ENCODE measurements at regions of chr5 and their contacts with region 1.

Region 1: DNA sequence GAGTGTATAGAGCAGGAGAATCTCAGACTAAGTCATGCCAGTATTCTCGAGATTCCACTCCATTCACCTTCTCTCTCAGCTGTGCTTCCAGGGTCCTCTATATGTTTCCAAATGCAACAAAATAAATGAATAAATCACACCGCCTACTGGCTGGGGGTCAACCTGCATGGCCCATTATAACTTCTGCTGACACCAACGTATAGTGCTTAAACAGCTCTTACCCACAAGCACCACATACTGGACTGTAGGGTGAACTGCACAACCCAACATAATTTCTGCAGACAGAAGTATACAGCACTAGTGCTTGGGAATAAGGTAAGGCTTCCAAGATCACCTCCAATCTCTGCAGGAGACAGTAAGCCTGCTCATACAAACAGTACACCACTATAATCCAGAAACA is 33.1 kb upstream of the HTR4 start:
- DNase-seq: peak; percentile 72 to 85 (median 75)
- ATAC-seq: peak; percentile 97
- H3K4me3 ChIP-seq: no peak overlapping the region
- H3K27ac ChIP-seq: no peak overlapping the region
- H3K4me1 ChIP-seq: peaks cover 0 to 25% of the 10 kb centered on the region in 2 experiments; a peak in 3 of 5 replicates
- H3K27me3 ChIP-seq: no peaks in the 10 kb centered on the region
- CTCF ChIP-seq: peak; percentile 96 to 99 (median 99)
- EP300 ChIP-seq: peak; percentile 13; the same call in 1 of the 2 replicates
- POLR2A ChIP-seq: no peak
- RAD21 ChIP-seq: peak; percentile 62 to 98

Region 2: DNA sequence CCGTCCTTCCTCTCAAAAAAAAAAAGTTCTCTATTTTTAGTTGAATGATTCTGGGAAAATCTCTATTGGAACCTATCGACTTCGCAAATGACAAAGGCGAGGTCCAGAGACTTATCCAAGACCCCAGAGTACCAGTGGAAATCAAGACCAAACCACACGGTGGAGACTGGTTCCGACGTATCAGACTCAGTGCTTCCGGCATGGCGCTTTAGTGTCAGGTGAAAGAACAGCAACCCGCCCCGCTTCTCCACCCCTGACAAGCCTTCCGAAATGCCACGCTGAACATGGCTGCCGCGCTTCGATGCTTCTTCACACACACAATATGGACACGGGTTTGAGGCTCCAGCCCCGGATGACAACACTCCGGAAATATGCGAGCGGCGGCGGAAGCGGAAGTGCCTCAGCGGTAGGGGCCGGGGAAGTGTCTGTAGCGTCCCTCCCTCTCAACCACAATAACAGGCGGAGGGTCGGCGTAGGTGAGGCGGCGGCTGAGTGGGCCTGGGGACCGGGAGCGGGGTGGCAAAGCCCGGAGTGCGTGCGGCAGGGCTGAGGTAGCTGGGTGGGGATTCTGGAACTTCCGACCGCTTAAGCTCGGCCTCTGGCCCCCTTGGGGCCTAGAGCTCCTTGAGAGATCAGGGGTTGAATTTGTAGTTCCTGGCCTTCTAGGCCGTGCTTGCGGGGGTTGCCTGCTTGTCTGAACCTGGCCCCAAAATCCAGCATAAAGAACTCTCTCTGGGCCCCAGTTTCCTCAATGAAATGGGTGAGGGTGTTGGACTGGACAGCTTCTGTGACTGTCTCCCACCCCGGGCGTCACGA is 303.7 kb before region 1 on chr5 and contains the start of gene FBXO38:
- CTCF ChIA-PET with region 1: no interaction called
- POLR2A ChIA-PET with region 1: no interaction called
- in situ Hi-C with region 1: no loop called
- intact Hi-C with region 1: loop called (anchors 5 kb)
- DNase-seq: peak; percentile 93 to 98 (median 94)
- ATAC-seq: peak; percentile 99
- H3K4me3 ChIP-seq: peak within 1 kb of the TSS; percentile 83
- H3K27ac ChIP-seq: peak within 1 kb of the TSS; percentile 90
- H3K4me1 ChIP-seq: peaks cover 7 to 17% of the 10 kb centered on the region in 2 experiments; a peak in 3 of 5 replicates
- H3K27me3 ChIP-seq: no peaks in the 10 kb centered on the region
- CTCF ChIP-seq: peak; percentile 19 to 37 (median 22); a peak in 3 of 6 replicates
- EP300 ChIP-seq: no peak
- POLR2A ChIP-seq: peak; percentile 91
- RAD21 ChIP-seq: no peak; a peak in 1 of 4 replicates
- polyA plus RNA-seq, gene FBXO38: 7.4 to 21.6 TPM

Region 3: GRCh38 chr5:148482691-148483462 is 204.6 kb before region 1 on chr5:
- CTCF ChIA-PET with region 1: no interaction called
- POLR2A ChIA-PET with region 1: no interaction called
- in situ Hi-C with region 1: no loop called
- intact Hi-C with region 1: loop called (anchors 1 kb)
- DNase-seq: peak; percentile 69 to 85 (median 75)
- ATAC-seq: peak; percentile 94
- H3K4me3 ChIP-seq: peak overlapping the region; percentile 16
- H3K27ac ChIP-seq: no peak overlapping the region; the same call in 2 of the 3 replicates
- H3K4me1 ChIP-seq: peaks cover 0 to 5% of the 10 kb centered on the region in 2 experiments; a peak in 2 of 5 replicates
- H3K27me3 ChIP-seq: no peaks in the 10 kb centered on the region; a peak in 1 of 5 replicates
- CTCF ChIP-seq: peak; percentile 78 to 94 (median 85)
- EP300 ChIP-seq: no peak
- POLR2A ChIP-seq: no peak
- RAD21 ChIP-seq: peak; percentile 29 to 67; a peak in 3 of 4 replicates

Region 4: GRCh38 chr5:148523139-148523538 is 164.3 kb before region 1 on chr5:
- CTCF ChIA-PET with region 1: no interaction called
- POLR2A ChIA-PET with region 1: no interaction called
- in situ Hi-C with region 1: no loop called
- intact Hi-C with region 1: loop called (anchors 5 kb)
- DNase-seq: no peak
- ATAC-seq: no peak
- H3K4me3 ChIP-seq: no peak overlapping the region
- H3K27ac ChIP-seq: no peak overlapping the region
- H3K4me1 ChIP-seq: no peaks in the 10 kb centered on the region
- H3K27me3 ChIP-seq: no peaks in the 10 kb centered on the region; a peak in 1 of 5 replicates
- CTCF ChIP-seq: peak in 2 of 3 experiments; percentile 11 to 29; a peak in 2 of 6 replicates
- EP300 ChIP-seq: no peak
- POLR2A ChIP-seq: no peak
- RAD21 ChIP-seq: no peak

Region 5: GRCh38 chr5:148569948-148570347 is 117.5 kb before region 1 on chr5:
- CTCF ChIA-PET with region 1: no interaction called
- POLR2A ChIA-PET with region 1: no interaction called
- in situ Hi-C with region 1: no loop called
- intact Hi-C with region 1: loop called (anchors 10 kb)
- DNase-seq: no peak
- ATAC-seq: 0 out of 3 replicates have a peak, but pooled peaks have one; percentile 7
- H3K4me3 ChIP-seq: no peak overlapping the region
- H3K27ac ChIP-seq: no peak overlapping the region
- H3K4me1 ChIP-seq: peaks cover 0 to 19% of the 10 kb centered on the region in 2 experiments; a peak in 2 of 5 replicates
- H3K27me3 ChIP-seq: no peaks in the 10 kb centered on the region
- CTCF ChIP-seq: no peak
- EP300 ChIP-seq: no peak
- POLR2A ChIP-seq: no peak
- RAD21 ChIP-seq: no peak

Region 6: GRCh38 chr5:148585988-148586387 is 101.4 kb before region 1 on chr5:
- CTCF ChIA-PET with region 1: no interaction called
- POLR2A ChIA-PET with region 1: no interaction called
- in situ Hi-C with region 1: no loop called
- intact Hi-C with region 1: no loop called
- DNase-seq: peak in 2 of 4 experiments; percentile 20 to 32
- ATAC-seq: peak; percentile 88
- H3K4me3 ChIP-seq: no peak overlapping the region
- H3K27ac ChIP-seq: no peak overlapping the region
- H3K4me1 ChIP-seq: no peaks in the 10 kb centered on the region
- H3K27me3 ChIP-seq: no peaks in the 10 kb centered on the region
- CTCF ChIP-seq: peak; percentile 44 to 56 (median 44); a peak in 5 of 6 replicates
- EP300 ChIP-seq: no peak
- POLR2A ChIP-seq: no peak
- RAD21 ChIP-seq: peak in 1 of 2 experiments; percentile 50; a peak in 2 of 4 replicates

Measured in K562 (cell line).